ENCODE measurements at regions of chr1 and their contacts with region 1.

Region 1: DNA sequence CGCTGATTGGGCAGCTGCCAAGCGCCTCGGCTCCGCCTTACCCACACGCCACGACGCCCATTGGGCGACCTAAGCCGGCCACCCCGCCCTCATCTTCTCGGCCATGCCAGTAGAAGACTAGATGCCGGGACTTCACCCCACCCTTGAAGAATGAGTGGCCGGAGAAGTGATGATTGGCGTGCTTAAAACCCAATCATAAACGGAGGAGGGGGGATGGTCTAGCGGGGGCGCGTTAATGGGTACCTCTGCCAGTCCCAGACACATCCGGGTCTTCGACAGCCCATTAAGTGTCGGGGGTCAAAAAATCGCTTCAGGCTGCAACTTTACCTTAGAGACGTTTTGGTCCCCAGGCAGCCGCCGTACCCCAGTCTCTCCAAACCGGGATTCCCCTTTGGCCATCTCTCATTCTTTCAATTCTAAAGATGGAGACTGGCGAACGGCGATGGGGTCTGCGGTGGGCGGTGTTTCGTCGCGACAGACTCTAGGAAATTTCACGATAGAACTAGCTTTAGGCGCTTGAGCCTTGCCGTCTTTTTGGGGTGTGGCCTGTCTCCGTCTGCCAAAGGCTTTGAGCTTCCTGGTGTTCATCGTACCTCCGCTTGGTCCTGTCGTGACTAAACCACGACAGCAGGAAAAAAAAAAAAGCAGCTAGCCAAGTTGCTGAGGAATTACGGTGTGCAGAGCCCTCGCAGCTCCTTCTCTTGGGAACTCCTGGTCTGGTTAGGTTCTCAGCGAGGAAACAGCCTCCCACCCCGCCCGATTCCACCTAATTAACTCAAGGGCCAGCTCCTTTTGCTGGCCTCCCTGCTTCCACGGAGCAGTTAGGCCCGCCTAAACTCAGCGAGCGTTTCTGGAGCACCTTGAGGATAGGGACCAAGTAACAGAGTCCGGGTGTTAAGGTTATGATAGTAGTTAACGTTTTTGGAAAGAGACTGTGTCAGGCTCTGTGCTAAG is at the start of gene GATAD2B:
- DNase-seq: peak; percentile 99
- H3K4me3 Mint-ChIP-seq: peak within 1 kb of the TSS; percentile 82
- H3K27ac Mint-ChIP-seq: peak within 1 kb of the TSS; percentile 96
- H3K4me1 Mint-ChIP-seq: peaks cover 50% of the 10 kb centered on the region
- H3K27me3 Mint-ChIP-seq: peaks cover 6% of the 10 kb centered on the region

Region 2: GRCh38 chr1:153796791-153797659 is 126.2 kb before region 1 on chr1:
- CTCF ChIA-PET with region 1: interaction called, 10 read pairs
- DNase-seq: peak; percentile 91
- H3K4me3 Mint-ChIP-seq: no peak overlapping the region
- H3K27ac Mint-ChIP-seq: no peak overlapping the region
- H3K4me1 Mint-ChIP-seq: peaks cover 37% of the 10 kb centered on the region
- H3K27me3 Mint-ChIP-seq: peaks cover 12% of the 10 kb centered on the region

Region 3: DNA sequence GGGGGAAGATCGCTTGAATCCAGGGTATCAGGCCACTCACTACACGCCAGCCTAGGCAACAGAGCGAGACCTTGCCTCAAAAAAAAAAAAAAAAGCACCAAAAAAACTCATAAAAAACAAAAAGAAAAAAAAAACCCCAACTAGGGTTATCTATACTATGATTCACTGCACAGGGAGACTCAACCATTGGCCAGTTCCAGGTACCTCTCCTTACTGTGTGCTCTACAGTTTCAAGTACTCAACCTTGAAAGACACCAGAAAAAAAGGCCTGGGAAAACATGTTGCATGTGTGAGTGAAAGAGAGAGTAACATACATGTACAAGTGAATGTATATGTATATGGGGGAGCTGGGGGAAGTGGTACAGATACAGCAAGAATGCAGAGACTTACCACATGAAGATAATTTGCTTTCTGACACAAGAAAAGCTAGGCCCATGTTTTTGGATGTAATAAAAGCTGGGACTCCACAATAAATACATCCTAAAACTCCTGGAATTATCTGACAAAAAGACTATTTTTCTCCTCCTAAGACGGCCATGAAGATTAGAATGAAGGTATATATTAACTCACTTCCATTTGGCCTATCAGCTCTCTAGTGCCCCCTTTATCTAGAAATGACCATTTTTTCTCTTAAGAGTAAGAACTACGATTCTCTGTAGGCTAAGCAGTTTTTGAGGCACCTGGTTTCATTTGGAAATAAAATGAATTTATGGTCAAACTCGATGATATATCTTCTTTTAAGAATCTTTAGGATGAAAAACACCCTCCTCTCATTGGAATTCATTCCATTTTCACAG is 95.9 kb before region 1 on chr1:
- CTCF ChIA-PET with region 1: interaction called, 21 read pairs
- DNase-seq: no peak
- H3K4me3 Mint-ChIP-seq: no peak overlapping the region
- H3K27ac Mint-ChIP-seq: peak overlapping the region; percentile 35
- H3K4me1 Mint-ChIP-seq: no peaks in the 10 kb centered on the region
- H3K27me3 Mint-ChIP-seq: no peaks in the 10 kb centered on the region

Region 4: DNA sequence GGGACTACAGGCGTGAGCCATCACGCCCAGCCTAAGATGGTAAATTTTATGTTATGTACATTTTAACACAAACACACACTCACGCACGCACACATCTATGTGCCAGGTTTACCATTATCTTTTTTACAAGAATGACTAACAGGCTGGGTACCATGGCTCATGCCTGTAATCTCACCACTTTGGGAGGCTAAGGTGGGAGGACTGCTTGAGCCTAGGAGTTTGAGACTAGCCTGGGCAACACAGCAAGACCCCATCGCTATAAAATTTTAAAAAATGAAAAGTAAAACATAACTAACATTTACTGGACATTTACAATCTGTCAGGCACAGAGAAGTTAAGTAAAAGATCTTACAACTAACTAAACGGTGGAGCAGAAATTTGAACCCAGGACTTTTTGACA is 15.2 kb before region 1 on chr1:
- CTCF ChIA-PET with region 1: interaction called, 11 read pairs
- DNase-seq: no peak
- H3K4me3 Mint-ChIP-seq: no peak overlapping the region
- H3K27ac Mint-ChIP-seq: no peak overlapping the region
- H3K4me1 Mint-ChIP-seq: peaks cover 28% of the 10 kb centered on the region
- H3K27me3 Mint-ChIP-seq: no peaks in the 10 kb centered on the region

Region 5: DNA sequence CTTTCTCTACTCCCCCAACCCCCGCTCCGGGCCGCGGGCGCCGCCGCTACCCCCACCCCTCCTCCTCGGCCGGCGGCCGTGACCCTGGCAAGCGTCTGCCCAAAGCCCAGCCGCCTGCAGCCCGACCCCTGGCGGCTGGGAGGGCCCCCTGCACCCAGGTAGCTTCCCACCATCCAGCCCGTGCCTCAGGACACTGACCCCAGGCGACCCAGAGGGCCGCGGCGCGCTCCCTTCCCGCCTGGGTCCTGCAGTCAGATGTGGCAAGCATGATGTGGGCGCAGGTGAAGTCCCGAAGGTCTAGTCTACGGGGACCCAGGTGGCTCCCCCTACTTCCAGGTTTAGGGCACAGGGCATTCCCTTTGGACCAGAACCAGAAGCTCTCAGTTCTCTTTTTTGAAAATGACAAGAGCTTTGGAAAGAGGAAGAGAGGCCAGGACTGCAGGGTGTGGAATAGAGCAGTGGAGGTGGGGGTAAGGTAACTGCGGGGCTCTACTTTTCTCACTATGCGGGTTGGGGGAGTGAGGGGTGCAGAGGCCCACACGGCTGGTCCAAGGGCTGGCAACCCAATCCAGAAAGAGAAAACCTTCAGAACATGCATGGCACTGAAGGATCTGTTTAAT is 23.5 kb after region 1 on chr1 and contains the start of gene DENND4B:
- CTCF ChIA-PET with region 1: interaction called, 23 read pairs
- DNase-seq: peak; percentile 80
- H3K4me3 Mint-ChIP-seq: peak within 1 kb of the TSS; percentile 96
- H3K27ac Mint-ChIP-seq: peak within 1 kb of the TSS; percentile 99
- H3K4me1 Mint-ChIP-seq: peaks cover 36% of the 10 kb centered on the region
- H3K27me3 Mint-ChIP-seq: peaks cover 4% of the 10 kb centered on the region

Measured in activated naive CD4-positive, alpha-beta T cell treated with anti-CD3 and anti-CD28 coated beads, Interleukin-2, amount 10 ng/mL, durations not matched to agents 7 days and 5 days (primary cell).